Activated CD4-positive, alpha-beta memory T cell treated with anti-CD3 and anti-CD28 coated beads, Interleukin-2, amount 10 ng/mL, durations not matched to agents 7 days and 5 days (primary cell): ENCODE measurements at regions of chr9 and their contacts with region 1.

Region 1: DNA sequence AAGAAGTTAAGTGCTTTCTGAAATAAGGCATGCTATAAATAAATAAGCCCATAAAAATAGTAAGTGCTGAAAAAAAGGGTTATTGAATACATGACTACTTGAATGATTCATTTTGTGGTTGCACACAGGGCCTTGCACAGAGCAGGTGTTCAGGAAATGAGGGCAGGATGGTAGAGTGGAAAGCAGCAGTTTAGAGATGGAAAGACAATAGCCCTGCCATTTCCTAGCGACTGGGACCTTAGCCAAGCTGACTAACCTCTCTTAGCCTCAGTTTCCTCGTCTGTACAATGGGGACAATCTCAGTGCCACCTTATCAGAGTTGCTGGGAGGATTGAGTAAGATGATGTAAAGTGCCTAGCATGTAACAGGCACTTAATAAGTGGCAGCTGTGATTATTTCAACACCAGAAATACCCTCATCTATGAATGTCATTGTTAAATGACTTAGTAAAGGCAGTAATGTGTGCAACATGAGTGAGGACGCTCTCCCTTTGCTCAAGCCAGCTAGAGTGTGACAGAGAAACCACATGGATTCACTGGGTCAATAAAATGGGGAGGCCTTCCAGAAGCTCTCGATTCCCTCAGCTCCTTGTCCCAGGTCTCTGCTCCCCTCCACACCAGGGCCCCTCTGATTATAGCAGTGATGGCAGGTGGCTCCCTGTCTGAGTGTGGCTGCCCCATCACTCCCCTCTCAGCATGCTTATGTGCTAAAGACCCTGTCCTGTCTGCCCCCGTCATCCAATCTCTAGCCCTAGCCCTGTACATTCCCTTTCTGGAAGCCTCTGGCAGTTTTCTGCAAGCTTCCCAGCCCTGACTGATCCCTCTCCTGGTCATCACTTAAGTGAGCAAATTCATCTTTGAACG is 16.0 kb upstream of the PHF19 start:
- DNase-seq: peak; percentile 76
- H3K4me3 Mint-ChIP-seq: peak overlapping the region; percentile 65
- H3K27ac Mint-ChIP-seq: peak overlapping the region; percentile 94
- H3K4me1 Mint-ChIP-seq: peaks cover 90% of the 10 kb centered on the region
- H3K27me3 Mint-ChIP-seq: no peaks in the 10 kb centered on the region

Region 2: DNA sequence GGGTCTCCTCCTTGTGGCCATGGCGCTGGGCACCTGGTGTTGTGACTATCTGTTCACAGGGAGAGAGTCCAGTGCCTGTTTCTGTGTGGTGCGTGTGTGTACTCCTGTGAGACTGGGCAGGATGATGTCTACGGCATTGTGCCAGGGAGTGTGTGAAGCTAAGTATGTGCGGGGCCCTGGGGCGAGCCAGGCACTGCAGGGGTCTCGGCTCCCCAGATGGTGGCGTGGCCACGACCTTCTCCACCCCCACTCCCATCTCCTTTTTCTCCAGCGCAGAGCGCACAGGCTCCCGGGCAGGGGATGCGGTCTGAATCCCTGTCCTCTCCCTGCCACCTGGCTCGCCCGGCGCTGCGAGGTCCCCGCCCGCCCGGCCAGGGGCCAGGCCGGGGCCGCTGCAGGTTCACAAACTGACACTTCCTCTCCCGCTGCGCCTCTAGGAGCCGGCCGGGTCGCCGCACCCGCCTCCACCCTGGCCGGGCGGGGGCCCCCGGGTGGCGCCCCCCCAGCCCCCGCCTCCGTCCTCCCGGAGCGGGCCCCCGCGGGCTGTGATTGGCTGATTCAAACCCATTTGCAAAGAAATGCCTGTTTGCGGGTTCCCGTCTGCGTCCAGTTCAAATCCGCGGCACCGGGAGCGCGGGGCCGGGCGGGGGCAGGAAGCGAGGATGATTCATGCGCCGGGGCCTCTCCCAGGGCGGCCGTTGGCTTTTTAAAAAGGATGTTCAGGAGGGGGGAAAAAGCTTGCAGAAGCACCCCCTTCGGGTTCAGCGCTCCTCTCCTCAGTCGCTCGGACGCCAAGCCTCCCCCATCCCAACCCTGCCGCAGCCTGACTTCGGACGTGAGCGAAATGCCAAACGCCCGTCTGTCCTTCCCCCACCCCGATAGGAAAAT is 16.8 kb before region 1 on chr9:
- CTCF ChIA-PET with region 1: interaction called, 59 read pairs
- POLR2A ChIA-PET with region 1: interaction called, 553 read pairs
- DNase-seq: peak; percentile 94
- H3K4me3 Mint-ChIP-seq: peak overlapping the region; percentile 94
- H3K27ac Mint-ChIP-seq: peak overlapping the region; percentile 98
- H3K4me1 Mint-ChIP-seq: peaks cover 76% of the 10 kb centered on the region
- H3K27me3 Mint-ChIP-seq: no peaks in the 10 kb centered on the region

Region 3: GRCh38 chr9:120909904-120910303 is 16.9 kb after region 1 on chr9:
- CTCF ChIA-PET with region 1: interaction called, 9 read pairs
- POLR2A ChIA-PET with region 1: interaction called, 121 read pairs
- DNase-seq: peak; percentile 47
- H3K4me3 Mint-ChIP-seq: no peak overlapping the region
- H3K27ac Mint-ChIP-seq: peak overlapping the region; percentile 83
- H3K4me1 Mint-ChIP-seq: peaks cover 89% of the 10 kb centered on the region
- H3K27me3 Mint-ChIP-seq: no peaks in the 10 kb centered on the region

Region 4: GRCh38 chr9:120928483-120929228 is 35.7 kb after region 1 on chr9:
- CTCF ChIA-PET with region 1: interaction called, 24 read pairs
- POLR2A ChIA-PET with region 1: interaction called, 1,205 read pairs
- DNase-seq: peak; percentile 86
- H3K4me3 Mint-ChIP-seq: peak overlapping the region; percentile 93
- H3K27ac Mint-ChIP-seq: peak overlapping the region; percentile 100
- H3K4me1 Mint-ChIP-seq: peaks cover 79% of the 10 kb centered on the region
- H3K27me3 Mint-ChIP-seq: no peaks in the 10 kb centered on the region